ENCODE measurements at regions of chr6 and their contacts with region 1.

Region 1: GRCh38 chr6:17311595-17312311 is 30.6 kb downstream of the RBM24 start:
- DNase-seq: peak; percentile 98
- ATAC-seq: peak; percentile 95
- H3K4me3 ChIP-seq: peak overlapping the region; percentile 9 to 60 (median 41)
- H3K27ac ChIP-seq: peak overlapping the region; percentile 88
- H3K4me1 ChIP-seq: peaks cover 50% of the 10 kb centered on the region
- H3K27me3 ChIP-seq: no peaks in the 10 kb centered on the region
- CTCF ChIP-seq: no peak
- EP300 ChIP-seq: peak in 1 of 2 experiments; percentile 94; a peak in 3 of 4 replicates
- POLR2A ChIP-seq: peak; percentile 49 to 72; a peak in 3 of 4 replicates
- RAD21 ChIP-seq: no peak

Region 2: DNA sequence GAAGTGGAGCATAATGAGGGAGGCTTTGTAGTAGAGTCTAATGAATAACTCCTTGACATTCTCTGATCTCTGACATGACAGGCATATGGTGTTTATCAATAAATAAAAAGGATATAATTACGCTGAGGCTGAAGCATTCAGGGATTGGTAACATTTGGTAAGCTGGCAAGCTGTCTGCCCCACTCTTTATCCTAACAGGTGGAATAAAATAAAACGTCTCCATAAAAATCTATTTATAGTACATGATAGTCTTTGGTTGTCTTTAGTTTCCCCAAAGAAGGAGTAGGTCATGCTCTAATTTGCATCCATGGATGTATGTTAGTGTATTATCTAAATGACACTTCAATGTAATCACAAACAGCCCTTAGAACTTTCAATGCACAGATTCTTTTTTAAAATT is 61.5 kb before region 1 on chr6:
- CTCF ChIA-PET with region 1: no interaction called
- POLR2A ChIA-PET with region 1: no interaction called
- in situ Hi-C with region 1: no loop called
- intact Hi-C with region 1: no loop called
- DNase-seq: no peak
- ATAC-seq: no peak
- H3K4me3 ChIP-seq: no peak overlapping the region
- H3K27ac ChIP-seq: no peak overlapping the region
- H3K4me1 ChIP-seq: no peaks in the 10 kb centered on the region
- H3K27me3 ChIP-seq: no peaks in the 10 kb centered on the region
- CTCF ChIP-seq: no peak
- EP300 ChIP-seq: no peak
- POLR2A ChIP-seq: no peak
- RAD21 ChIP-seq: no peak

Region 3: GRCh38 chr6:17354700-17355403 is 43.1 kb after region 1 on chr6:
- CTCF ChIA-PET with region 1: no interaction called
- POLR2A ChIA-PET with region 1: interaction called, 45 read pairs
- in situ Hi-C with region 1: no loop called
- intact Hi-C with region 1: loop called (anchors 1 kb)
- DNase-seq: peak; percentile 99
- ATAC-seq: peak; percentile 95
- H3K4me3 ChIP-seq: peak overlapping the region in 2 of 3 experiments; percentile 0 to 31; a peak in 2 of 6 replicates
- H3K27ac ChIP-seq: peak overlapping the region; percentile 82
- H3K4me1 ChIP-seq: peaks cover 72% of the 10 kb centered on the region
- H3K27me3 ChIP-seq: no peaks in the 10 kb centered on the region
- CTCF ChIP-seq: no peak
- EP300 ChIP-seq: peak; percentile 44 to 96; a peak in 2 of 4 replicates
- POLR2A ChIP-seq: no peak; a peak in 1 of 4 replicates
- RAD21 ChIP-seq: no peak

Measured in HepG2 (cell line).